Activated B cell treated with CpG ODN at 0.5 μM for 24 hours (primary cell): ENCODE measurements at regions of chr19 and their contacts with region 1.

Region 1: DNA sequence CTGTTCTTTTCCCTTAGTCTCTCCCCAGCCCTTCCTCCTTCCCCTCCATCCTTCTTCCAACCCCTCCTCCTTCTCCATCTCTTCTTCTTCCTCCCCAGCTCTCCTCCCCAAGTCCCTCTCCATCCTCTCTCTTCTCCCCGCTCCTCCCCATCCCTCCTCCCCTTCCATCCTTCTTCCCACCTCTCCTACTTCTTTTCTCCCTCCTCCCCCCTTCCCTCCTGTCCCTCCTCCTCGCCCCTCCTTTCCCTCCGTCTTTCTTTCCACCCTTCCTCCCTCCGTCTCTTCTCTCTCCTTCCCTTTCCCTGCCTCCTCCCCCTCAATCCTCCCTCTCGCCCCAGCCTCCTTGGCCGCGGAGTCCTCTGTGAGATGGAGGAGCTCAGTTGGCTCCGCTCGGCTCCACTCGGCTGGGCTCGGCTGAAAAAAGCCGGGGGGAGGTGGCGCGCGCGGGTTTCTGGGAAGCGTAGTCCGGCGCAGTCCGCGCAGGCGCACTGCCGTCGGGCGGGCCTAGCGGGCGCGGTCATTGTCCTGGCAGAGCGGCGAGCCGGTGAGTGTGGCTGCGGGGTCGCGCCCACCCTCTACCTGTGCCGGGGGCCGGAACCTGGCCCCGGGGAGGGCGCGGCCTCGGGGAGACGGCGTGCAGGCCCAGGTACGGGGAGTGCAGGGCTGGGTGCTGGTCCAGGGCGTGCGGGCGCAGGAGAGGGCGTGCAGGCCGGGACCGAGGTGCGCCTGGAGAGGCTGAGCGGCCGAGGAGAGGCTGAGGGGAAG is at the start of gene ZNF71:
- DNase-seq: peak; percentile 87
- ATAC-seq: peak; percentile 95
- H3K4me3 Mint-ChIP-seq: peak within 1 kb of the TSS; percentile 96
- H3K27ac Mint-ChIP-seq: peak within 1 kb of the TSS; percentile 82
- H3K4me1 Mint-ChIP-seq: peaks cover 13% of the 10 kb centered on the region
- H3K27me3 Mint-ChIP-seq: no peaks in the 10 kb centered on the region
- CTCF ChIP-seq: no peak
- total RNA-seq, gene ZNF71: 6.3 and 6.7 TPM in 2 replicates

Region 2: DNA sequence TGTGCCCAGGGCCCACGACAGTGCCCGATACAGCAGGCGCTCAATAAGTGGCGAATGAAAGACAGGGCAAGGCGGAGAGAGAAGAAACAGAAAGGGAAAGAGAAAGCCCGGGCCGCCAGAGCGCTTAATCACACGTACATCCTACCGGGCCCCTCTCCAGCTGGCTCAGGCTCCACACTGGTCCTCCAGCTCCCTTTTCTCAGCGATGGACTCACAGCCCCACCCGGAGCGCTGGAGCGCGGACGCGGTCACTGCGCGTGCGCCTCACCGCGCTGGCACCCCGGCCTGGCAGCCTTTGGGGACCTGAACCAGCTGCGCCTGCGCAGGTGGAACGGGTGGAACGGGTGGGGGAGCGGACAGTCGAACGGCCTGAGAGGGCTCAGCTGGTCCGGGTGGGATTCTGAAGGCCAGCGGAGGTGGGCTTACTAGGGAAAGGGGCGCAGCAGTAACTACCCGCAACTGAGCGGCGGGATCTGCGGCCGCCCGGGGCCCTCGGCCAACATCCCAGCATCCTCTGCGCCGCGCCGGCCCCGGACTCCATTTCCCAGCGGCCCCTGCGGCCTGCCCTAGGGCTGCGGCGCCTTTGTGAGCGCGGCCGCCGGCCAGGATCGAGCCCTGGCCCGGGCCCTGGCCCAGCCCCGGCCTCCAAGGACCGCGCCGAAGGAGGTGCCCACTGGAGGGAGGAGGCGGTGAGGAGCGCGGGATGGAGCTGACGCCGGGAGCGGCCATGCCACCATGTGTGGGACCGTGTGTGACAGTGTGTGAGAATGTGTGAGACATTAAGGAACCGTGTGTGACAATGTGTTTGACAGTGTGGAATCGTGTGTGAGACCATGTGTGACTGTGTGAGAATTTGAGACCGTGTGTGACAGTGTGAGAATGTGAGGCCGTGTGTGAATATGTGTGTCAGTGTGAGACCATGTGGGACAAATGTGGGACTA is 190.9 kb before region 1 on chr19 and contains the start of gene ZNF583:
- CTCF ChIA-PET with region 1: no interaction called
- POLR2A ChIA-PET with region 1: interaction called, 11 read pairs
- intact Hi-C with region 1: loop called (anchors 2 kb)
- DNase-seq: peak; percentile 93
- ATAC-seq: peak; percentile 87
- H3K4me3 Mint-ChIP-seq: peak within 1 kb of the TSS; percentile 95
- H3K27ac Mint-ChIP-seq: peak within 1 kb of the TSS; percentile 96
- H3K4me1 Mint-ChIP-seq: peaks cover 29% of the 10 kb centered on the region
- H3K27me3 Mint-ChIP-seq: no peaks in the 10 kb centered on the region
- CTCF ChIP-seq: no peak
- total RNA-seq, gene ZNF583: 5.7 and 6.0 TPM in 2 replicates

Region 3: DNA sequence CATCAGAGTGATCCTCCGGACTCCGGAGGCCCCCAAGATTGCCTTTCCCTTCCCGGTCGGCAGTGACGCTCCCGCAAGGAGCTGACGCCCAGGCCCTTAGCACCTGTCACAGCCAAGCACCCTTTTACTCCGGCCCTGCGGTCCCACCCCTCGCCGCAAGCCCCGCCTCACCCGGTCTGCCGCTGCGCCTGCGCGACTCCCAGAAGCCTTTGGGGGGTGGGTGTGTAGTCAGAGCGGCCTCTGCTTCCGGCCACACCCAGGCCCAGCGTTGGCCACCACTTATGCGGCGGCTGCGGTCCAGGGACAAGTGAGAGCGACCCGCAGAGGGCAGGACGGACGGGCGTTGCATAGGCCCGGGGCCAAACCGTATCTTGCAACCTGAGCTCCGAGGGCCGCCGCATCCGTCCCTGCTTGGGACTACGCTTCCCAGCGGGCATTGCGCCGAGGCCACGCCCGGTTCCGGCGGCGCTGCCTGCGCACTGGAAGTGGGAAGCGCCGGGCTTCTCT is 56.7 kb before region 1 on chr19:
- CTCF ChIA-PET with region 1: no interaction called
- POLR2A ChIA-PET with region 1: no interaction called
- intact Hi-C with region 1: loop called (anchors 1 kb)
- DNase-seq: peak; percentile 92
- ATAC-seq: peak; percentile 89
- H3K4me3 Mint-ChIP-seq: peak overlapping the region; percentile 91
- H3K27ac Mint-ChIP-seq: peak overlapping the region; percentile 94
- H3K4me1 Mint-ChIP-seq: peaks cover 19% of the 10 kb centered on the region
- H3K27me3 Mint-ChIP-seq: no peaks in the 10 kb centered on the region
- CTCF ChIP-seq: no peak

Region 4: DNA sequence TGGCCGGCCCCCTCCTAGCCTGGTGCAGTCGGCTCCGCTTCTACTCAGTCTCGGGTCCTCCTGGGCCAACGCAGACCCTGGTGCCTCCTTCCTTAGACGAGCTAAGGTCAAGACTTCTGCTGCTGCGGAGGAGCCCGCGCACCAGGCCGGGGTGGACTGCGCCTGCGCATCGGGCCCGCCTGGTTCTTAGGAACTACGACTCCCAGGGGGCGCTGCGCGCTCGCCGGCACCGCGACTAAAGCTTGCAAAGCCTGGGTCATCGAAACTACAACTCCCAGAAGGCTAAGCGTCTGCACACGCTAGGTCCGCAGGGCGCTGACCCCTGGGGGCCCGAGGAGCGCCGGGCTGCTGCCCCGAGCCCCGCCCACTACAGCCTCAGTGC is 76.6 kb after region 1 on chr19 and contains the start of gene ZNF835:
- CTCF ChIA-PET with region 1: no interaction called
- POLR2A ChIA-PET with region 1: no interaction called
- intact Hi-C with region 1: loop called (anchors 1 kb)
- DNase-seq: peak; percentile 91
- ATAC-seq: peak; percentile 98
- H3K4me3 Mint-ChIP-seq: peak within 1 kb of the TSS; percentile 94
- H3K27ac Mint-ChIP-seq: peak within 1 kb of the TSS; percentile 84
- H3K4me1 Mint-ChIP-seq: peaks cover 16% of the 10 kb centered on the region
- H3K27me3 Mint-ChIP-seq: no peaks in the 10 kb centered on the region
- CTCF ChIP-seq: no peak
- total RNA-seq, gene ZNF835: 5.5 and 5.7 TPM in 2 replicates